GM10248 (cell line): ENCODE measurements at regions of chr7 and their contacts with region 1.

Region 1: GRCh38 chr7:55255496-55256435 is 109.4 kb upstream of the LANCL2 start:
- DNase-seq: peak; percentile 85
- CTCF ChIP-seq: peak; percentile 91

Region 2: DNA sequence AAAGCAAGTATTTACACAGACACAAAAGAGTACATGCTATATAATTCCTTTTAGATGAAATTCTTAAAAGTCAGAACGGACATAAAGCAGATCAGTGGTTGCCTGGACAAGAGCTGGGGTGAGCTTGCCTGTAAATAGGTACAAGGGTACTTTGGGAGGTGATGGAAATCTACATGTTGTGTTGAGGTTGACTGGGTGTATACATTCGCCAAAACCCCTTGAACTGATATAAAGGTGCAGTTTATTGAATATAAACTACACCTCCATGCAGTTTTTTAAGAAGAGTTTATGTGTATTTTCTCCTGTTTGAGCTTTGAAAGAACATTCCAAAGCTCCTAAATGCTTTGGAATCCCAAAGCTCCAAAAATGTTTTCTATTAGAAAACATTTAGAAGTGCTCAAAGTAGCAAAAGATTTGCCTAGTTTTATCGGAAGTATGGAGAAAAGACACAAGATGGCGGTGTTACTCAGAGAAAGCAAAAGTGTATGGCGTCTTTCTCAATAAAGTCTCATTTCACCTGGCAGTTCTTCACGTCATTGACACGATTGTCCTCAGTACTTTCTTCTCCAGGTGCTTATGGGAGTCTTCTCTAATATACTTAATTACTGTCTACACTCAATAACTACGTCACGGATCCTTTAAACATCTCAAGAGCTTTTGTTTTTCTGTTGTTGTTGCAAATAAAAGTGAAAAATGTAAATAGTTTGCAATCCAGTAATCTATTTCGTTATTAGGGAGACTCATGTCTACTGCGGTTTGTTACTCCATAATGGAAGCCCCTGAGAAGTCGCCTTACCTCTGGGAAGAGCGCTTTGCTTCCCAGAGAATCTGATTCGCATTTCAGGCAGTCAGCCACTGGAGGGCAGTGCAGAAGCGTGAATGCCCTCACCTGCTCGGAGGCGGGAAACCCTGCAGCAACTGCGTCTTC is 482.0 kb before region 1 on chr7:
- CTCF ChIA-PET with region 1: interaction called, 224 read pairs
- POLR2A ChIA-PET with region 1: interaction called, 3 read pairs
- DNase-seq: peak; percentile 64
- CTCF ChIP-seq: peak; percentile 91

Region 3: GRCh38 chr7:54839538-54840213 is 416.1 kb before region 1 on chr7:
- CTCF ChIA-PET with region 1: interaction called, 10 read pairs
- POLR2A ChIA-PET with region 1: no interaction called
- DNase-seq: no peak
- CTCF ChIP-seq: peak; percentile 23

Region 4: DNA sequence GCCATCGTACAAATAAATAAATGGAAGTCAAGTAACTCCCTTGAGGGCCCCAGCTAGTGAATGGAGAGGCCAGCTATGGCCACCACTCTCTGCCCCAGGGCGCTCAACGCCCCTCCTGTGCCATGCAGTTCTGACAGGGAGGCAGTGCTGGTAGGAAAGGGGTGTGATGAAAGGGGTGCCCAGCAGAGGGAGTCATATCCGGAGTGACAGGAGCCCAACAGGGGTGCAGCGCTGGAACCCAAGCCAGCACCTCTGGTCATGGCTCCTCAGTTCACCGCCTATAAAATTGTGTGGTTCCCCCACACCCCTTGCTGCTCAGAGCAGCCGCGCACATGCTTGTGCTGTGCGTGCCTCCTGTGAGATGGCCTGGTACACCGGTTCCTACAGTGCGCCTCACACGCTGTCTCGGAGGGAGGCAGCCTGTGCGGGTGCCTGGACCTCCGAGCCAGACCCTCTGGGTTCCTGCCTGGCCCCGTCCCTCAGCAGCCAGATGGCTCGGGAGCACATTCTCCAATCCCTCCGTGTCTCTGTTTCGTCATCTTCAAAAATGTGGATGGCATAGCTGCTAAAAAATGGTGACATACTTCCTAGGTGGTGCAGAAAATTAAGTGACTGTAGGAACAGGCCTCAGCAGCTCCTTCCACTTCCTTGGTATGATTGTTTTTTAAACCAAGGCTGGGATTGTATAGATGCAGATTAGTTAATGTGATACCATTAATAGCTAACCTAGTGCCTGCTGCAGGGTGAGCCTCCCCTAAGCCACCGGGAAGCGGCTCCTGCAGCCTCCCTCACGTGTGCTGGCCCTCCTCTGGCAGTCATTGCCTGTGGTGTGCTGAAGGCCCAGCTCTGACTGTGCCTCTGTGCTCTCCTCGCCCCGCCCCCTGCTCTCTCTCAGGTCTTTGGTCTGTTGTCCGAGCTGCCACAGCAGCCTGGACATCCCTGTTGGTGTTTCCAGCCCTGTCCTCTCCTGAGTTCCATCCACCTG is 111.1 kb before region 1 on chr7:
- CTCF ChIA-PET with region 1: interaction called, 13 read pairs
- POLR2A ChIA-PET with region 1: no interaction called
- DNase-seq: no peak
- CTCF ChIP-seq: no peak

Region 5: DNA sequence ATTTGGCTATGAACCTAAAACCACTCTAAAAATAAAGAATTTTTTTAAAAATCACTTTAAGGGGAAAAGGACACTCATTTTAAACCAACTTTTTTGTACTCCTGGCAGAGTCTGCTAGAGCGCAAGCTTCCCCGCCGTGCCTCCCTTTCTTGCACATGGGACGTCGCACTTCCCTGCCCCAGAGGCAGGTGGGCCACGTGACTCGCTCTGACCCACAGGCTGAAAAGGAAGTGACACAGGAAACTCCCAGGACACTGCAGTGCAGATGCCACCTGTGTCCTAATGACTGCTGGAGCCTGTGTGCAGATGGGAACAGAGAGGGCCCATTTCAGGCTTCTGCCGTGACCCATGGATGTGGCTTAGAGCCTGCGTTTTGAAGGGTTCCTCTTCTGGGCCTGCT is 32.7 kb before region 1 on chr7:
- CTCF ChIA-PET with region 1: interaction called, 10 read pairs
- POLR2A ChIA-PET with region 1: no interaction called
- DNase-seq: no peak
- CTCF ChIP-seq: no peak

Region 6: DNA sequence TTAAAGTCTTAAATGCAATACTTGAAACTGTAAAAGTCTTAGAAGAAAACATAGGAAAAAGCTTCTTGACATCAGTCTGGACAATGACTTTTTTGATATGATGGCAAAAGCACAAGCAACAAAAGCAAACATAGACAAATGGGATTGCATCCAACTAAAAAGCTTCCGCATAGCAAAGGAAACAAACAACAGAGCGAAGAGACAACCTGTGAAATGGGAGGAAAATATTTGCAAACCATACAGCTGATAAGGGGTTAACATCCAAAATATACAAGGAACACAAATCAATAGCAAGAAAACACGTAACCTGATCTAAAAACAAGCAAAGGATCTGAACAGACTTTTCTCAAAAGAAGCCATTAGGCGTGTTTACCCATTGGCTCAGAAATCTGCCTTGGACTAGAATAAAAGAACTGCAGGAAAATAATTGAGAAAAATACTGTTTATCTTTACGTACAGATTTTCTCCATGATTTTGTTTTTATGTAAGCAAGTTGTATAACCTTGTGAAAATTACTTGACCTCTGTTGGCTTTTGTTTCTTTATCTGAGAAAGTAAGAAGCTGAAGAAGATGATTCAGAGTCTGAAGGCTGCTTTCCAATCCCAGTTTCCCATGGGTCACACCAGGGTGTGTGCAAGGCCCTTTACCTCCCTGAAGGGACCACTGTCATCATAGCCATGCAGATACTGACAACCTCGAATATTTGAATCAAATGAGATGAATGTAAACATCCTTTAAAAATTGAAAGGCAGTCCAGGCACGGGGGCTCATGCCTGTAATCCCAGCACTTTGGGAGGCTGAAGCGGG is 10.3 kb after region 1 on chr7:
- CTCF ChIA-PET with region 1: interaction called, 32 read pairs
- POLR2A ChIA-PET with region 1: no interaction called
- DNase-seq: no peak
- CTCF ChIP-seq: no peak